AG04449 (cell line): ENCODE measurements at regions of chr3 and their contacts with region 1.

Region 1: DNA sequence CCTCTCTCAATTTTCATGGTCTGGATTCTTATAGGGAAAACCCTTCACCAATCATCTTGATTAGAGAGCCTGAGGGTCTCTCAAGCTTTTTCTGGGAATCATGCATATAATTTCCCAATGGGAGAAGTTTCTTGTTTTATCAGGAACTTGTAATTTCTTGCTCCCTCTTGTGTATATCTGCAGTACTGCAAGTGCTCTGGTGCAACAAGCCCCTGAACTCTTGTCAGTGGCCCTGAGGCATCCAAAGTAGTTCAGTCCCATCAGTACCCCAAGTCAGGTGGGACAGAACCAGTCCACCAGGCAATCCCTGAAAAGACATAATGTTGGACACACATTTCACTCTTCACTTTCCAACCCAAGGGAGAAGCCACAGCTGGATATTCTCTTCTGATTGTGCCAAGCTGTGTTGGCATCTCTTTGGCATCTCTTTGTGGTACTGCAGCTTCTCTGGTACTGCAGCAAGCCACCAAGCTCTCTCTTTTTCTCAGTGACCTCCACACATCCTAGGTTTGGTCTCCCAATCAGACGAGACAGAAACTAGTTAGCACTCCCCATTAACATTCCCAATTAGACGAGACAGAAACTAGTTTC is 214.5 kb downstream of the ZIC4 start:
- DNase-seq: peak; percentile 21
- H3K4me3 ChIP-seq: no peak overlapping the region
- CTCF ChIP-seq: peak; percentile 57

Region 2: DNA sequence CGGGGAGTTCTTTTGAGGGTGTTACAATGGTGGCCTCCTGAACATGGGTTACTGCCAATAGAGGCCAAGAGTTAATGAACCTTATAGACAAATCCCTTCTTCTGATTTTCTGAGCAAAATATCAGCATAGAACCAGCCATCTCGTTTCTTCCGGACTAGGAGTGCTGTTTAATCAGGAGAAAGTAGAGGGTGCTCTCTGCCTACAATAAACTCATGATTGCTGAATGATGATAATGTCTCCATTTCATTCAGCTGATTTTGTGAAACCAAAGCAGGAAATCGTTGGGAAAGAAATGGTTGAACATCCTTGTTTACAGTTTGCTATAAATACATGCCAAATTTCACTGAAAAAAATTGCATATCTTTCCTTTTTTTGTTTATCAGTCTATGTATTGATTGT is 444.0 kb before region 1 on chr3:
- CTCF ChIA-PET with region 1: interaction called, 47 read pairs
- POLR2A ChIA-PET with region 1: no interaction called
- DNase-seq: peak; percentile 14
- H3K4me3 ChIP-seq: no peak overlapping the region
- CTCF ChIP-seq: peak; percentile 42

Region 3: DNA sequence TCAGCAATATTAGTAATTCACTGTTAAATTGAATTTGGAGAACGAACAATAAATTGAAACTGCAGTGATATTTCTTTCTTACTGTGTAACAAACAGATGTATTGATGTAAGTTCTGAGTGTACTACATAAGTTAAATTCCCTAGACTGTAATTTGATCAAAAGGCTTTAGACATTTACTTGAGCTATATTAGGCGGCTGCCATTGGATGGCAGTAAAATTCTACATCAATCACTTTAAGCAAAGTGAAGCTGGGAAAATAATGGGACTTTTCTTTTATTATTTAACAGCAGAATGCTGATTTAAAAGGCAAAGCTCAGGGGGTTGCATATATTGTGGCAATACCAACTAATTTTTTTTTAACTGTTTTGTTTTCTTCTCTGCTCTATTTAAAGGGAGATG is 374.2 kb before region 1 on chr3:
- CTCF ChIA-PET with region 1: interaction called, 27 read pairs
- POLR2A ChIA-PET with region 1: no interaction called
- DNase-seq: no peak
- H3K4me3 ChIP-seq: no peak overlapping the region
- CTCF ChIP-seq: peak; percentile 16

Region 4: GRCh38 chr3:147119989-147120388 is 71.9 kb before region 1 on chr3:
- CTCF ChIA-PET with region 1: interaction called, 24 read pairs
- POLR2A ChIA-PET with region 1: no interaction called
- DNase-seq: no peak
- H3K4me3 ChIP-seq: no peak overlapping the region
- CTCF ChIP-seq: peak; percentile 33

Region 5: GRCh38 chr3:147161833-147162232 is 30.1 kb before region 1 on chr3:
- CTCF ChIA-PET with region 1: interaction called, 10 read pairs
- POLR2A ChIA-PET with region 1: no interaction called
- DNase-seq: no peak
- H3K4me3 ChIP-seq: no peak overlapping the region
- CTCF ChIP-seq: no peak

Region 6: GRCh38 chr3:147173257-147173656 is 18.6 kb before region 1 on chr3:
- CTCF ChIA-PET with region 1: interaction called, 11 read pairs
- POLR2A ChIA-PET with region 1: no interaction called
- DNase-seq: no peak
- H3K4me3 ChIP-seq: no peak overlapping the region
- CTCF ChIP-seq: no peak

Region 7: DNA sequence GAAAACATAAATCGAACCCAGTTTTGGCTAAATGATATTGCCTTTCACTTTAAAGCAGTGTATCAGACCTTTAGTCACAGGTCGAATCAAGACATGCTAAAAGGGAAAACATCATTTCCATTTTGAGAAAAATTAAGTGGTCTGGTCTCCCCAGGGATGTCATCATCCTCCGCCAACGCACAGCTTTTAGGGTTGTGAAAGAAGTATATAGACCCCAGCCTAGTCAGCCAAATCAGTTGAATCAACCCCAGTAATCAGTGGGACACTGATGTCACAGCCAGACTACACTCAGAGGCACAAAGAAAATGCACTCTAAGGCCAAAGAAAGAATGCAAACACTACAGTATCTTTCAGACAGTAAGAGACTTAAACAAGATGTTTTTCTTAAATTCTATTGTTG is 27.1 kb after region 1 on chr3:
- CTCF ChIA-PET with region 1: interaction called, 10 read pairs
- POLR2A ChIA-PET with region 1: interaction called, 3 read pairs
- DNase-seq: no peak
- H3K4me3 ChIP-seq: no peak overlapping the region
- CTCF ChIP-seq: no peak

Region 8: DNA sequence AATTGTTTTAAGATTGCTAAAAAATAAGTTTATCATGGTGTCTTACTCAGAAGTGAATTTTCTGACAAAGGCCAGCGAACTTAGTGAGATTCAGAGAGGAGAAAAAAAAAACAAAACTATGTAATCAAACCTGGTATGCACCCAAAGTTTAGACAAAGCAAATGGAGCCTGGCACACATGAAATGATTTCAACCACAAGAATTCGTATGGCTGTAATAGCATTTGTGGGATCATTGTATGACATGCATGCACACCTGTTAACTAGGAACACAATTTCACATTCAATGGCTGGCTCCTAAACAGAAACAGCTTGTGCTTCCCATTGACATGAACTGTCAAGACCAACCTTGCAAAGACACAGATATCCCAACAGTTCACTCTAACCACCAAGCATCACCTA is 119.8 kb after region 1 on chr3:
- CTCF ChIA-PET with region 1: no interaction called
- POLR2A ChIA-PET with region 1: no interaction called
- DNase-seq: no peak
- H3K4me3 ChIP-seq: no peak overlapping the region
- CTCF ChIP-seq: no peak